Activated T-helper 1 cell treated with anti-CD3 and anti-CD28 coated beads, Interleukin-12 subunit alpha, Interleukin-12 subunit beta, Interleukin-2, Interleukin-4 antibody, amounts not matched to agents 30 ng/mL and 10 ng/mL and 1 ng/mL, durations not matched to agents 14 hours and 24 hours and 36 hours (primary cell): ENCODE measurements at regions of chr22 and their contacts with region 1.

Region 1: DNA sequence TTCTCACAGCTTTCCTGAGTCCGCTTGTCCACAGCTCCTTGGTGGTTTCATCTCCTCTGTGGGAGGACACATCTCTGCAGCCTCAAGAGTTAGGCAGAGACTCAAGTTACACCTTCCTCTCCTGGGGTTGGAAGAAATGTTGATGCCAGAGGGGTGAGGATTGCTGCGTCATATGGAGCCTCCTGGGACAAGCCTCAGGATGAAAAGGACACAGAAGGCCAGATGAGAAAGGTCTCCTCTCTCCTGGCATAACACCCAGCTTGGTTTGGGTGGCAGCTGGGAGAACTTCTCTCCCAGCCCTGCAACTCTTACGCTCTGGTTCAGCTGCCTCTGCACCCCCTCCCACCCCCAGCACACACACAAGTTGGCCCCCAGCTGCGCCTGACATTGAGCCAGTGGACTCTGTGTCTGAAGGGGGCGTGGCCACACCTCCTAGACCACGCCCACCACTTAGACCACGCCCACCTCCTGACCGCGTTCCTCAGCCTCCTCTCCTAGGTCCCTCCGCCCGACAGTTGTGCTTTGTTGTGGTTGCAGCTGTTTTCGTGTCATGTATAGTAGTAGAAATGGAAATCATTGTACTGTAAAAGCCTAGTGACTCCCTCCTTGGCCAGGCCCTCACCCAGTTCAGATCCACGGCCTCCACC is 11.7 kb downstream of the RASD2 start:
- DNase-seq: peak; percentile 78
- H3K4me3 Mint-ChIP-seq: no peak overlapping the region
- H3K27ac Mint-ChIP-seq: peak overlapping the region; percentile 37
- H3K4me1 Mint-ChIP-seq: peaks cover 14% of the 10 kb centered on the region
- H3K27me3 Mint-ChIP-seq: peaks cover 3% of the 10 kb centered on the region

Region 2: DNA sequence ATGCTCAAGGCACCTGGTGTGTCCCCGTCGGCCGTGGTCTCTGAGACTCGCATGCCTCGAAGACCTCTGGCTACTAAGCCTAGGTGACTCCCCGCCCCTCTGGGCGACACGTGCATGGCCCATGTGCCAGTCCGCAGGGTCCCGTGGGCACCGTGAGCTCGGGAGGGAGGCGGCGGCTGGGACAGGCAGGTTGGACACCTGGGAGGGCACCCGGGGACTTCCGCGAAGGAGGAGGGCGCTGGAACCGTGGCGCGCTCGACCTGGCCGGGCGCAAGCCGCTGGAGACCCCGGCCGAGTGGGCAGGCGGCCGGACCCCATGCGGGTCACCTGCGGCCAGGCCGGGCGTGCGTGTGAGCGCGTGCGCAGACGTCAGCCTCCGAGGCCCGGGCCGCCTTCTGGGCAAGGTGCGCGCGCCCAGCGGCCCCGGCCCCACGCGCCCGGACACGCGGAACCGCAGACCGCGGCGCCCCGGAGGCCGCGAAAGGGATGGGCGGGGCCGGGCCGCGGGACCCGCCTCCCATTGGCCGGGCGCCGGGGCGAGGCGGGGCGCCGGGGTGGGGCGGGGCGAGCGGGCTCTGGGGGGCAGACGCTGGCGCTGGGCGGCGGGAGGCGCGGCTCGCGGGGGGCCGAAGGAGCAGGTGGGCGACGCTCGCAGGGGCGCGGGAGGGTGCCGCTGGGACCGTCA is 12.3 kb before region 1 on chr22:
- intact Hi-C with region 1: loop called (anchors 1 kb)
- DNase-seq: peak; percentile 56
- H3K4me3 Mint-ChIP-seq: peak overlapping the region; percentile 66
- H3K27ac Mint-ChIP-seq: no peak overlapping the region
- H3K4me1 Mint-ChIP-seq: no peaks in the 10 kb centered on the region
- H3K27me3 Mint-ChIP-seq: peaks cover 41% of the 10 kb centered on the region

Region 3: GRCh38 chr22:35611891-35612576 is 59.7 kb after region 1 on chr22:
- intact Hi-C with region 1: loop called (anchors 10 kb)
- DNase-seq: no peak
- H3K4me3 Mint-ChIP-seq: no peak overlapping the region
- H3K27ac Mint-ChIP-seq: peak overlapping the region; percentile 2
- H3K4me1 Mint-ChIP-seq: peaks cover 25% of the 10 kb centered on the region
- H3K27me3 Mint-ChIP-seq: peaks cover 2% of the 10 kb centered on the region

Region 4: DNA sequence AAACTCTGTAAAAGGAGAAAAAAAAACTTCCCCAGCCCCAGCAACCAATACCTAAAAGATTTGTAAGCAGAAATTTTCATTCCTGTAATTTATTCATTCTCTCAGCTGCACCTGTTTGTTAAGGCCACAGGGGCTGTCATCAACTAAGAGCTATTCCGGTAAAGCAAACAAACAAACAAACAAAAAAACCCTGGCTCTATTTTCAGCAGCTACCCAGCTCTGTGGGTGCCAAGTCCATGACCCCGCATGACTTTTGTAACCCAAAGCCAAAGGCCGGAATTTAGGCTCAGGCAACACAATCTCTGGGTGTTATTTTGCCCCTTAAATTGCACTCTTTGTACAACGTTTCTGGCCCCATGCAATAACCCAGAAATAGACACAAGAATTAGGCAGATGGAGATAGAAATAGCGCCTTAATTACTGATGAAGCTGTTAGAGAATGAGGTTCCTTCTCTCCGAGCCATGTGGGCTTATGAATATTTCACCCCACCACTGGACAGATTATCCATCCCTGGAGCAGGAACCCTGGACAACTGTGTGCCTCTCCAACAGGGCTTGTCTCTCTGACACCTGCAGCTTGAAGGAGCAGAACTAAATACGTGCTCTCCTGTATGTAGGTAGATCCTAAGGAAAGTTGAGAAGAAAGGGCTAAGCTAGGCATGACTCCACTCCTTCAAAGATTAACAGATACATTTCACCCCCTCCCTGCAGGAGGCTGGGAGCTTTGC is 125.3 kb after region 1 on chr22:
- intact Hi-C with region 1: no loop called
- DNase-seq: no peak
- H3K4me3 Mint-ChIP-seq: no peak overlapping the region
- H3K27ac Mint-ChIP-seq: no peak overlapping the region
- H3K4me1 Mint-ChIP-seq: peaks cover 16% of the 10 kb centered on the region
- H3K27me3 Mint-ChIP-seq: no peaks in the 10 kb centered on the region